GM12878 (cell line): ENCODE measurements at regions of chr12 and their contacts with region 1.

Region 1: DNA sequence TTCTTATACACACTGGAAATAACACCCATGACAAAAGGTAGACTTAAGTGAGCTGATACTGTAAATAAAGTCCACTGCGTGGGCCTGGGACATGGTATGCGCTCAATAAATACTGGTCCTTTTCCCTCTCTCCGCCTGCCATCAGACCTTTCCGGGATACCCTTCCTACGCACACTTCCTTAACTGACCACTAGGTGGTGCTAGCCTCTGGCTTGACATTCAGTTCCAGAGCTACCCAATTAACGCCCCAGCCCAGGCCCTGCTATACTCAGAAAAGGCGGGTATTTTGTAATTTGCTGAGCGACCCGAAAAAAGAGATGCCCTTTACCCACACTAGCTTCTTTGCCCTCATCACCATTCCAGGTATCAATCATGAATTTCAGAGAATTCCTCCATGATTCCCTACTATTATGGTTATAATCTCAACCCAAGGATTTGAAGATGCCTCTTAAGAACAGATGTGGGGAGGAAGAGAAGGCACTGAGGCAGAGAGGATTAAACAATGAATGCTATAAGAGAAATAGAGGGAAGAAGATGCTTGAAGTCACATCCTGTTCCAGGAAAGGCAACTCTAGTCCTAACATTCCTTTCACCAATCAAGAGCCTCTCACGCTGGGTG is 3.9 kb upstream of the LRP1 start:
- DNase-seq: no peak
- ATAC-seq: peak; percentile 84
- H3K4me3 ChIP-seq: no peak overlapping the region
- H3K27ac ChIP-seq: no peak overlapping the region
- H3K4me1 ChIP-seq: peaks cover 9% of the 10 kb centered on the region
- H3K27me3 ChIP-seq: peaks cover 2 to 5% of the 10 kb centered on the region in 2 experiments
- CTCF ChIP-seq: peak; percentile 75 to 95 (median 94)
- EP300 ChIP-seq: no peak
- POLR2A ChIP-seq: no peak
- RAD21 ChIP-seq: peak; percentile 79

Region 2: GRCh38 chr12:57069523-57069922 is 54.8 kb before region 1 on chr12:
- CTCF ChIA-PET with region 1: interaction called, 37 read pairs
- POLR2A ChIA-PET with region 1: interaction called, 3 read pairs
- RAD21 ChIA-PET with region 1: interaction called, 9 read pairs
- SMC1A ChIA-PET with region 1: interaction called, 7 read pairs
- in situ Hi-C with region 1: no loop called
- intact Hi-C with region 1: no loop called
- DNase-seq: no peak
- ATAC-seq: peak; percentile 99
- H3K4me3 ChIP-seq: no peak overlapping the region; the same call in 1 of the 2 replicates
- H3K27ac ChIP-seq: peak overlapping the region; percentile 22; the same call in 1 of the 2 replicates
- H3K4me1 ChIP-seq: peaks cover 7% of the 10 kb centered on the region; the same call in 1 of the 2 replicates
- H3K27me3 ChIP-seq: no peaks in the 10 kb centered on the region
- CTCF ChIP-seq: peak; percentile 81 to 92 (median 89)
- EP300 ChIP-seq: no peak
- POLR2A ChIP-seq: no peak
- RAD21 ChIP-seq: peak; percentile 96

Region 3: DNA sequence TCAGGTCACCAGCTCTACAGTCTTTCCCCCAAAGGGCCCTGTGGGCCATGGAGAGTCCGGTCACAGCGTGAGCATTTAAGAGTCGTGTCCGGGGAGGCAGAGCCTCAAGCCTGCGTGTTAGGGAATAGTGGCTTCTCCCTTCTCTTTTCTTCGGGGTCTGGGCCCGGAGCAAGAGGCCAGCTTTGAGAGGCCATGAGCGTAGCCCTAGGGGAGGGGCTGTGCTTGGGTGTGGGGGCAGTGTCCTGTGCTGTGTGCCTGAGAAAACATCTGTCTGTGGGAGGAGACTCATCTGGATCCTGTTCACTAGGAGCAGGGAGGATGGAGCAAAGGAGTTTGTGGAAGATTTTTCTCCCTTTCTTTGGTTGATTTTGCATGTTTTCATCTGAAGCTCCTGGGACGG is 17.8 kb after region 1 on chr12:
- CTCF ChIA-PET with region 1: interaction called, 13 read pairs
- POLR2A ChIA-PET with region 1: no interaction called
- RAD21 ChIA-PET with region 1: interaction called, 4 read pairs
- SMC1A ChIA-PET with region 1: no interaction called
- in situ Hi-C with region 1: no loop called
- intact Hi-C with region 1: no loop called
- DNase-seq: no peak
- ATAC-seq: no peak
- H3K4me3 ChIP-seq: no peak overlapping the region
- H3K27ac ChIP-seq: no peak overlapping the region
- H3K4me1 ChIP-seq: no peaks in the 10 kb centered on the region
- H3K27me3 ChIP-seq: peaks cover 0 to 3% of the 10 kb centered on the region in 2 experiments; a peak in 2 of 4 replicates
- CTCF ChIP-seq: no peak
- EP300 ChIP-seq: no peak
- POLR2A ChIP-seq: no peak
- RAD21 ChIP-seq: no peak

Region 4: DNA sequence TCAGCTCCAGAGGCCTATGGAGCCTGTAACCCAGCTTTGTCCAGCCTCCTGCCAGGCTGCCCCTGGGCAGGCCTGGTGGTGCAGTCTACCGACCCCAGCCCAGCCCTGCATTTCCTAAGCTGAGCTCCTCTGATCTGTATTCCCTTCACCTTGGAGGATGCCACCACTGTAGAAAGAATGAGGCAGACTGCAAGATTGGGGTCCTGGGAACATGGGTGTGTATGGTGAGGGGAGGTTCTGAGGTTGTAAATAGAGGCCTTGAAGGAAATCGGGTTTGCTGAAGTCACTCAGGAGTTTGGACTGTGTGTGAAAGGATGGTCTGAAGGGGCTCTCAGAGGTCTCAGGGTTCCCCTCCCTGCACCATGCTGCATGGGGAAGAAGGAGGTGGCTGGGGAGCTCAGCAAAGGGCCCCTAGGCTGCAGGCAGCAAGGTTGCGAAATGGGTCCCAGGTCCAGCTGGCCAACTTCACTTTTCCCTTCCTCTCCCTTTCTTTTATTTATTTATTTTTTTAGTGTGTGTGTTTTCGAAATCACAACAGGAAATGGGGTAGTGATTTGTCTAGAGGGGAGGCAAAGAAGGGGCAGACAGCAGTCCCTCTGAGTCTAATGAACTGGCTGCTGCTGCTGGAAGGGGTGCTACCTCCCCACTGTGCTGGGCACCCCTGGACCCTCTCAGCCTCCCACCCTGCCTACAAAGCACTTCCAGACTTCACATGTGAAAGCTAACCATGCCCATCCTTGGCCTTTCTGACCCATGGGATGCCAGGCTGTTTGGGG is 24.3 kb after region 1 on chr12:
- CTCF ChIA-PET with region 1: interaction called, 13 read pairs
- POLR2A ChIA-PET with region 1: no interaction called
- RAD21 ChIA-PET with region 1: interaction called, 4 read pairs
- SMC1A ChIA-PET with region 1: no interaction called
- in situ Hi-C with region 1: no loop called
- intact Hi-C with region 1: no loop called
- DNase-seq: no peak
- ATAC-seq: no peak
- H3K4me3 ChIP-seq: no peak overlapping the region
- H3K27ac ChIP-seq: no peak overlapping the region
- H3K4me1 ChIP-seq: no peaks in the 10 kb centered on the region
- H3K27me3 ChIP-seq: peaks cover 0 to 3% of the 10 kb centered on the region in 2 experiments; a peak in 2 of 4 replicates
- CTCF ChIP-seq: no peak
- EP300 ChIP-seq: no peak
- POLR2A ChIP-seq: no peak
- RAD21 ChIP-seq: no peak

Region 5: DNA sequence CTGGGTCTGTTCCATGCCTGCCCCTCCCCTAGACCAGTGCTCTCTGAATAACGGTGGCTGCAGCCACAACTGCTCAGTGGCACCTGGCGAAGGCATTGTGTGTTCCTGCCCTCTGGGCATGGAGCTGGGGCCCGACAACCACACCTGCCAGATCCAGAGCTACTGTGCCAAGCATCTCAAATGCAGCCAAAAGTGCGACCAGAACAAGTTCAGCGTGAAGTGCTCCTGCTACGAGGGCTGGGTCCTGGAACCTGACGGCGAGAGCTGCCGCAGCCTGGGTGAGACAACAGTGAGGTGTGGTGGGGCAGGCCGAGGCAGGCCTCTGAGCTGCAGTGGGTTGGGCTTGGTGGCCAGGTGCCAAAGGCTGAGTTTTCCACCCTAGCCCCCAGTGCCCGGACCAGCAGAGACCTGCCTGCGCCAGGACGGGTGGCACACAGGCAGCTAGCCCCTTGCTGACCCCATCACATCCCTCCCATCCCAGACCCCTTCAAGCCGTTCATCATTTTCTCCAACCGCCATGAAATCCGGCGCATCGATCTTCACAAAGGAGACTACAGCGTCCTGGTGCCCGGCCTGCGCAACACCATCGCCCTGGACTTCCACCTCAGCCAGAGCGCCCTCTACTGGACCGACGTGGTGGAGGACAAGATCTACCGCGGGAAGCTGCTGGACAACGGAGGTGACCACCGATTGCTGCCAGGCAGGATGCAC is 51.2 kb after region 1 on chr12:
- CTCF ChIA-PET with region 1: interaction called, 159 read pairs
- POLR2A ChIA-PET with region 1: no interaction called
- RAD21 ChIA-PET with region 1: interaction called, 13 read pairs
- SMC1A ChIA-PET with region 1: interaction called, 36 read pairs
- in situ Hi-C with region 1: loop called (anchors 5 kb)
- intact Hi-C with region 1: loop called (anchors 1 kb)
- DNase-seq: no peak
- ATAC-seq: peak; percentile 60
- H3K4me3 ChIP-seq: no peak overlapping the region
- H3K27ac ChIP-seq: no peak overlapping the region
- H3K4me1 ChIP-seq: no peaks in the 10 kb centered on the region
- H3K27me3 ChIP-seq: no peaks in the 10 kb centered on the region; a peak in 1 of 4 replicates
- CTCF ChIP-seq: peak; percentile 53 to 78 (median 54)
- EP300 ChIP-seq: no peak
- POLR2A ChIP-seq: no peak
- RAD21 ChIP-seq: peak; percentile 27; the same call in 1 of the 2 replicates

Region 6: GRCh38 chr12:57182921-57183790 is 58.8 kb after region 1 on chr12:
- CTCF ChIA-PET with region 1: interaction called, 159 read pairs
- POLR2A ChIA-PET with region 1: no interaction called
- RAD21 ChIA-PET with region 1: interaction called, 8 read pairs
- SMC1A ChIA-PET with region 1: interaction called, 36 read pairs
- in situ Hi-C with region 1: loop called (anchors 5 kb)
- intact Hi-C with region 1: loop called (anchors 1 kb)
- DNase-seq: peak; percentile 15
- ATAC-seq: peak; percentile 98
- H3K4me3 ChIP-seq: no peak overlapping the region
- H3K27ac ChIP-seq: no peak overlapping the region
- H3K4me1 ChIP-seq: no peaks in the 10 kb centered on the region
- H3K27me3 ChIP-seq: no peaks in the 10 kb centered on the region; a peak in 2 of 4 replicates
- CTCF ChIP-seq: peak; percentile 96 to 98 (median 97)
- EP300 ChIP-seq: no peak
- POLR2A ChIP-seq: no peak
- RAD21 ChIP-seq: peak; percentile 89

Region 7: DNA sequence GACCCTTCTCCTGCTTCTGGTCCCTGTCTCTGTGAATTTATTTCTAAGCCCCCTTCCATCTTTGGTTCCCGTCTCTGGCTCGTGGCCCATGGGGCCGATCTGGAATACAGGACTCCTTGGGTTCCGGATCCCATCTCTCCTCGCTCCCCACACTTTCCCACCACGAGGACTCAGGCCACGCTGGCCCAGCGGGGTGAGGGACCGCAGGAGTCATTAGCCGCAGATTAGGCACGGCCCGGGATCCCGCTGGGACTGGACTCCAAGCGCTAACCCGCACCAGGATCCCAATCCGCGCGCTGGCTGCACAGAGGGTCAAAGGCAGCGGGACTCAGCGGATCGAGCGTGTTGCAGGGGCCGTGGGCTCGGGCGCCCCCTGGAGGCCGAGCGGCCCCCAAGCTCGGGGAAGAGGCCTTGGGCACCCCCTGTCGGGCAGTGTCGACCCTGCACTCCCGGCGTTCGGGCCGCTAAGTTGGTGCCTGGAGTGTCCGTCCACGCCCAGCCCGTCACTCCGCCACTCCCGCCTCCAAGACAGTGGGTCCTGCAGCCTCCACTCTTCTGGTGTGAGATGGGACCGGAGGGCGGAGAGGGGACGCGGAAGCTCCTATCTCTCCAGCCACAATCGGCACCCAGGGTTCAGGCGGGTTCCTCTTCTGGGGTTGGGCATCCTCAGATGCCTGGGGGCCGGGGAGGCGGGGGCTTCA is 114.6 kb after region 1 on chr12:
- CTCF ChIA-PET with region 1: interaction called, 6 read pairs
- POLR2A ChIA-PET with region 1: no interaction called
- RAD21 ChIA-PET with region 1: interaction called, 5 read pairs
- SMC1A ChIA-PET with region 1: no interaction called
- in situ Hi-C with region 1: no loop called
- intact Hi-C with region 1: loop called (anchors 5 kb)
- DNase-seq: no peak
- ATAC-seq: peak; percentile 72
- H3K4me3 ChIP-seq: peak overlapping the region; percentile 68
- H3K27ac ChIP-seq: no peak overlapping the region
- H3K4me1 ChIP-seq: peaks cover 47% of the 10 kb centered on the region
- H3K27me3 ChIP-seq: peaks cover 5 to 8% of the 10 kb centered on the region in 2 experiments; a peak in 3 of 4 replicates
- CTCF ChIP-seq: peak; percentile 100; a peak in 5 of 6 replicates
- EP300 ChIP-seq: no peak
- POLR2A ChIP-seq: peak; percentile 66; the same call in 1 of the 2 replicates
- RAD21 ChIP-seq: peak; percentile 88